CD14-positive monocyte (primary cell): ENCODE measurements at regions of chr6 and their contacts with region 1.

Region 1: DNA sequence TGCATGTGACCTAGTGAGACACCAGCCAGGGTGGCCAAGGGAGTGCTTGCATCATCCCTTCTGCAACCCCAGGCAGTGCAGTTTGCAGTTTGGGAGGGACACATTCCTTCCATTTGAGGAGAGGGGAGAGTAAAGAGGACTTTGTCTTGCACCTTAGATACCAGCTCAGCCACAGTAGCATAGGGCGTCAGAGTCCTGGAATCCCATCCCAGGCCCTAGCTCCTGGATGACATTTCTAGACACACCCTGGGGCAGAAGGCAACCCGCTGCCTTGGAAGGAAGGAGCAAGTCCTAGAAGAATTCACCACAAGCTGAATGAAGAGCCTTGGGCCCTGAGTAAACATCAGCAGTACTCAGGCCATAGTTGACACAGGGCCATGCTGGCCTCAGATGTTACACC is 680.4 kb upstream of the IMPG1 start:
- DNase-seq: no peak
- H3K4me3 ChIP-seq: no peak overlapping the region
- H3K4me3 Mint-ChIP-seq: no peak overlapping the region
- H3K27ac ChIP-seq: no peak overlapping the region
- H3K27ac Mint-ChIP-seq: peak overlapping the region in 1 of 7 donors; percentile 66
- H3K4me1 ChIP-seq: no peaks in the 10 kb centered on the region
- H3K4me1 Mint-ChIP-seq: no peaks in the 10 kb centered on the region
- H3K27me3 ChIP-seq: no peaks in the 10 kb centered on the region
- H3K27me3 Mint-ChIP-seq: no peaks in the 10 kb centered on the region
- CTCF ChIP-seq: no peak

Region 2: GRCh38 chr6:76724760-76725159 is 28.1 kb before region 1 on chr6:
- intact Hi-C with region 1: loop called in 1 of 2 experiments (anchors 2 kb)
- DNase-seq: no peak
- H3K4me3 ChIP-seq: no peak overlapping the region
- H3K4me3 Mint-ChIP-seq: no peak overlapping the region
- H3K27ac ChIP-seq: no peak overlapping the region
- H3K27ac Mint-ChIP-seq: no peak overlapping the region
- H3K4me1 ChIP-seq: no peaks in the 10 kb centered on the region
- H3K4me1 Mint-ChIP-seq: no peaks in the 10 kb centered on the region
- H3K27me3 ChIP-seq: no peaks in the 10 kb centered on the region
- H3K27me3 Mint-ChIP-seq: no peaks in the 10 kb centered on the region
- CTCF ChIP-seq: no peak